ENCODE measurements at regions of chr4 and their contacts with region 1.

Region 1: GRCh38 chr4:153750197-153750817 is 9.5 kb downstream of the RNF175 start:
- DNase-seq: no peak
- ATAC-seq: peak; percentile 75

Region 2: GRCh38 chr4:153634738-153635353 is 115.5 kb before region 1 on chr4:
- intact Hi-C with region 1: loop called (anchors 10 kb)
- DNase-seq: no peak
- ATAC-seq: no peak